ENCODE measurements at regions of chr17 and their contacts with region 1.

Region 1: DNA sequence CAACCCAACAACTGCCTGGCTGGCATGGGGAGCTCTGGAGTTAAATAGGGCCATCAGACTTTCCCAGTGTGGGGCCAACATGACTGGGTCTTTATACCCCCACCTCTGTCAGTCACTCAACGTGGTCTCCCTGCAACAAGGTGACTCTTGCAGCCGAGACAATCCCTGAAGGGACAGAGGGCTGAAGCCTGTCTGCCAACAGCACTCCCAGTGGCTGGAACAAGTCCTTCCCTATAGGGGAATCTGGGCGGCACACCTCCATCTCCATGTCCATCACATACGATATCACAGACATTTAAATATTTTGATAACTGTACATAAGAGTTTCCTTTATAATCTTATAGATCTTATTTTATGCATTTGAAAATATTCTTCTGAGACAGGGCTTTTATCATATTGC is 4.8 kb upstream of the MAPT start:
- DNase-seq: no peak
- H3K4me3 ChIP-seq: no peak overlapping the region
- H3K27ac ChIP-seq: no peak overlapping the region
- H3K4me1 ChIP-seq: peaks cover 9% of the 10 kb centered on the region
- H3K27me3 ChIP-seq: peaks cover 15% of the 10 kb centered on the region
- CTCF ChIP-seq: peak; percentile 30

Region 2: GRCh38 chr17:45677770-45678169 is 211.8 kb before region 1 on chr17:
- intact Hi-C with region 1: no loop called
- DNase-seq: no peak
- H3K4me3 ChIP-seq: no peak overlapping the region
- H3K27ac ChIP-seq: no peak overlapping the region
- H3K4me1 ChIP-seq: no peaks in the 10 kb centered on the region
- H3K27me3 ChIP-seq: peaks cover 66% of the 10 kb centered on the region
- CTCF ChIP-seq: no peak

Region 3: DNA sequence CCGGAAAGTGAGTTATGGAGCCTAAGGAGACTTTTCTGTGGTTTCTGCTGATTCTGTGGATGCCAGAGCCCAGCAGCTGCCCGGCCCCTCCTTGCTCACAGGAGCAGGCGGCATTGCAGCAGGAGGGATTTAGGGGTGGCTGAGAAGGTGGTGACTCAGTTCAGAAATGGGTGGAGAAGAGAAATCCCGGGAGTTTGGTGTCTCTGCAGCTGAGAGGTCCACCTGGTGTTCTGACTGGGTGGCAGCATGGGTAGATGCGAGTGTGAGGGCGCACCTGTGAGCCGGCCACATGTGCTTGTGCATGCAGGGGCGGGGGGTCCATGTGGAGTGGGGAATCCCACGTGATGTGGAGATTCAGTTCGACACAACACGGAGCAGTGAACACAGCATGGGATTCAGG is 61.0 kb before region 1 on chr17:
- intact Hi-C with region 1: loop called (anchors 10 kb)
- DNase-seq: no peak
- H3K4me3 ChIP-seq: no peak overlapping the region
- H3K27ac ChIP-seq: no peak overlapping the region
- H3K4me1 ChIP-seq: no peaks in the 10 kb centered on the region
- H3K27me3 ChIP-seq: peaks cover 82% of the 10 kb centered on the region
- CTCF ChIP-seq: no peak

Measured in left ventricle myocardium inferior (tissue), 1 donor.